Panc1 (cell line): ENCODE measurements at regions of chr3 and their contacts with region 1.

Region 1: GRCh38 chr3:57572096-57572495 is 16.0 kb downstream of the PDE12 start:
- DNase-seq: no peak
- ATAC-seq: no peak
- H3K4me3 ChIP-seq: no peak overlapping the region
- H3K27ac ChIP-seq: no peak overlapping the region
- H3K4me1 ChIP-seq: no peaks in the 10 kb centered on the region
- H3K27me3 ChIP-seq: no peaks in the 10 kb centered on the region
- CTCF ChIP-seq: no peak

Region 2: GRCh38 chr3:57627976-57628375 is 55.9 kb after region 1 on chr3:
- CTCF ChIA-PET with region 1: no interaction called
- POLR2A ChIA-PET with region 1: interaction called, 11 read pairs
- in situ Hi-C with region 1: no loop called
- intact Hi-C with region 1: no loop called
- DNase-seq: no peak
- ATAC-seq: no peak
- H3K4me3 ChIP-seq: no peak overlapping the region
- H3K27ac ChIP-seq: no peak overlapping the region
- H3K4me1 ChIP-seq: no peaks in the 10 kb centered on the region
- H3K27me3 ChIP-seq: no peaks in the 10 kb centered on the region
- CTCF ChIP-seq: no peak

Region 3: DNA sequence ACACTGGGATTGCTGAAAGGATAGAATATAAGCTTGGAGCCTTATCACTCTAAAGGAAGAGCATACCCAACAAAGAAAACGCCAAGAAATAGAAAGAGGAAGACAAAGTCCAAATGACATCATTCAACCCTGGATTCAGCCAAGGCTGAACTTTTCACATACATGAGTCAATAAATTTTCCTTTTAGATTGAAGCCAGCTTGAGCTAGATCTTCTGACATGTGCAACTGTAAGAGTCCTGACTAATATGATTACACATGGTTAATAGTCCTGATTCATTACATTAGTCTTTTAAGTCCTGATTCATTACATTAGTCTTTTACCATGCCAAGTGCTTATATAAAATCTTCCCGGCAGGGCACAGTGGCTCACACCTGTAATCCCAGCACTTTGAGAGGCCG is 134.4 kb after region 1 on chr3:
- CTCF ChIA-PET with region 1: no interaction called
- POLR2A ChIA-PET with region 1: no interaction called
- in situ Hi-C with region 1: no loop called
- intact Hi-C with region 1: no loop called
- DNase-seq: no peak
- ATAC-seq: no peak
- H3K4me3 ChIP-seq: no peak overlapping the region
- H3K27ac ChIP-seq: no peak overlapping the region
- H3K4me1 ChIP-seq: no peaks in the 10 kb centered on the region
- H3K27me3 ChIP-seq: no peaks in the 10 kb centered on the region
- CTCF ChIP-seq: no peak